H1 (cell line): ENCODE measurements at regions of chr18 and their contacts with region 1.

Region 1: DNA sequence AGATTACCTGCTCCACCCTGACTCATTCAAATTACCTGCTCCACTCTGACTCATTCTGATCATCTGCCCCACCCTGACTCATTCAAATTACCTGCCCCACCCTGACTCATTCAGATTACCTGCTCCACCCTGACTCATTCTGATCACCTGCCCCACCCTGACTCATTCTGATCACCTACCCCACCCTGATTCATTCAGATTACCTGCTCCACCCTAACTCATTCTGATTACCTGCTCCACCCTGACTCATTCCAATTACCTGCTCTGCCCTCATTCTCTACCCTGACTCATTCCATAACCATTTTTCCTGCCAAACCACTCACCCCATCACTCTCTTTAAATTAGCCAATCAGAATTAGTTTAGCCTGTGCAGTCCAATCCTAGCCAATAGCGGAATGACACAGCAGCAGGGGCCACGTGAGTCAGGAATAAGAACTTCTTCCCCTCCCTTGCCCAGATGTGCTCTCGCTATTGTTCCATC is 26.2 kb downstream of the CFAP53 start:
- DNase-seq: no peak
- H3K4me3 ChIP-seq: no peak overlapping the region
- H3K27ac ChIP-seq: no peak overlapping the region
- H3K4me1 ChIP-seq: no peaks in the 10 kb centered on the region
- H3K27me3 ChIP-seq: no peaks in the 10 kb centered on the region
- CTCF ChIP-seq: no peak
- EP300 ChIP-seq: no peak
- POLR2A ChIP-seq: no peak
- RAD21 ChIP-seq: no peak

Region 2: DNA sequence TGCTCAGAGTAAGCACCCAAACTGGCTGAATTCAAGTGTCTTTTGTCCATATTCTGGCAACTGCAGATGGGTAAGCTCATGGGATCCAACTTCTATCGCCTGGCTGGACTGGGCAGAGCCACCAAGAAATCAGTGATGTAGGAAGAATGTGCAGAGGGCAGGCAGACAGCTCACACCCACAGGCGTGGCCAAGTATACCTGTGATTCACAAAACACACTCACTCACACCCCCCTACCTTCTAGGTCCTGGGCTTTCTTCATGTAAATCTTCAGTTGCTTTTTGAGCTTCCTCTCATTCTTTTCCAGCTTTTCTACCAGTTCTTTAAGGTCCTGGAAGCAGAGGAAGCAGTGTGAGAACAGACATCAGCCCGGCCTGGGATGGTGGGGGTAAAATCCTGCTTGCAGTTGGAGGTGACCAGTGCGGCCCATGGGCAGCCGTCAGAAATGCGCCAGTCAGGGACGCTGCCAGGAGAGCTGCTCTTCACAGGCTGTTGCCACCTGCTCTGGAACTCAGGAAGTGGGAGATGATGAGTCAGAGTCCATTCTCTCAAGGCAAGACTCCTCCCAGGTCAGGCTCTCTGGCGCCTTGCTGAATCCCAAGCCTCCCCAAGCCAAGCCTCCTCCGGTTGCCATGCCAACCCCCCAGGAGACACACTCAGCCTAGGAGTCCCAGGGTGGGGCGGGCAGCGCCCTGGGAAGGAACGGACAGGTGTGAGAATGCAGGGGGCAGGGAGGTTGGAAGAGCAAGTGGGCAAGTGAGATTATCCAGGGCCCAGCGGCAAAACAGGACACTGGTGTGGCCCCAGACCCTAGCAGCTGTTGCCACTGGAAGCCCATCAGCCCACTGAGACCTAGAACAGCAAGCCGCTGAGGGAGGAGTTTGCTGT is 390.5 kb before region 1 on chr18:
- CTCF ChIA-PET with region 1: no interaction called
- POLR2A ChIA-PET with region 1: no interaction called
- DNase-seq: peak; percentile 58 to 64
- H3K4me3 ChIP-seq: no peak overlapping the region
- H3K27ac ChIP-seq: no peak overlapping the region
- H3K4me1 ChIP-seq: peaks cover 0 to 25% (median 9%) of the 10 kb centered on the region in 4 experiments; a peak in 5 of 7 replicates
- H3K27me3 ChIP-seq: no peaks in the 10 kb centered on the region; a peak in 1 of 7 replicates
- CTCF ChIP-seq: no peak
- EP300 ChIP-seq: no peak
- POLR2A ChIP-seq: no peak
- RAD21 ChIP-seq: no peak

Region 3: GRCh38 chr18:50250935-50251334 is 10.8 kb after region 1 on chr18:
- CTCF ChIA-PET with region 1: interaction called, 11 read pairs
- POLR2A ChIA-PET with region 1: no interaction called
- DNase-seq: no peak
- H3K4me3 ChIP-seq: no peak overlapping the region
- H3K27ac ChIP-seq: no peak overlapping the region
- H3K4me1 ChIP-seq: peaks cover 0 to 3% (median 0%) of the 10 kb centered on the region in 4 experiments; a peak in 1 of 7 replicates
- H3K27me3 ChIP-seq: no peaks in the 10 kb centered on the region
- CTCF ChIP-seq: no peak
- EP300 ChIP-seq: no peak
- POLR2A ChIP-seq: no peak
- RAD21 ChIP-seq: no peak